ENCODE measurements at regions of chr2 and their contacts with region 1.

Region 1: DNA sequence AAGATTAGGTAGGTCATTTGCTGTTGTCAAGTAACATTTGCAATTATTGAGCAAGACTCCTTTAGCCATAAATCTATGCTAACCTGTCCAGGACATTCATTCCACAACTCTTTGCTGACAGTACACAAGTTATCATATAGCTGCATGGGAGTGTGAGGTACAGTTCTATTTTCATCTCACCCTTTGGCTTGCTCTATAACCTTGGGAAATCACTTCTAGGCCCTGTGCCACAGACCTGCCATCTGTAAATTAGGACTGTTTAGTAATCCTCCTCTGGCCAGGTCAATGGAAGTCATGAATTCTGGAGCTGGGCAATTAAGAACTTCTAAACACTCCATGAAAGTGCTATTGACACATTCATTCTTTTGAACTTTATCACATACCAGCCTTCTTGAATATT is 34.6 kb upstream of the PAIP2B start:
- DNase-seq: peak; percentile 8
- H3K4me3 Mint-ChIP-seq: no peak overlapping the region
- H3K27ac Mint-ChIP-seq: no peak overlapping the region
- H3K4me1 Mint-ChIP-seq: no peaks in the 10 kb centered on the region
- H3K27me3 Mint-ChIP-seq: peaks cover 52% of the 10 kb centered on the region
- CTCF ChIP-seq: no peak

Region 2: DNA sequence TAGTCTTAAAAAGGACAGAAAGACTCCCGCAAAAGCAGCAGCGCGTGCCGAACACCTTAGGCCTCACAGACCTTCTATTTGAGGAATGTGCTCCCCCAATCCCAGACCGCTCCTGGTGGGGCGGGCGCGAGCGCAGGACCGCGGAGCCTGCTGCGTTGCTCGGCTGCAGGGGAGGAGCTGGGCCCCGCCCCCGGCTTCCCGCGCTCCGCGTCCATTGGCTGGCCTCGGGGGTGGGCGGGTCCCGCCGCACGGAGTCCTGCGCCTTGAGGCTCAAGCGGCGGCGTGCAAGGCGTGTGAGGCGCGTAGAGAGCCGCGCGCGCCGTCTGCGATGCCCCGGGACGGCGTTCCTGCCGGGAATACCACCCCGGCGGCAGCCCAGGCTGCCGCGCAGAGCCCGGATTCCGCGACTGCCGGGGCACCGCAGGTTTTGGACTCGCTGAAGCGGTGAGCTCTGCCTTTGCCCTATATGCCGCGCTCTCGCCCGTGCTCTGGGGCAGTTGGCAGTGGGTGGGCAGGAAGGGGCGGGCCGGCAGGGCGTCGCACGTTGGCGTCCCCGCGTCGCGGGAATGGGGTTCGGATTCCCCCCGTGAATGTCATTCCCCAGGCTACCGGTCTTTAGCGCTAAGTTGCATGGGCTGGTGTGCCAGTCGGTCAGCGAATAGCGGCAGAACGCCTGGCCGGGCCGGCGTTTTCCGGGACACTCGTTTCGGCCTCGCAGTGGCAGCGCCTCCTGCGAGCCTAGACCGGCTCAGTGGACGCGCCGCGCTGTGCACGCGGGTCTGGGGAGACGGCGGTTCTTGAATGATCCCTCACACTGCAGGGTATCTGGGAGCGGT is 15.0 kb after region 1 on chr2:
- CTCF ChIA-PET with region 1: interaction called, 5 read pairs
- POLR2A ChIA-PET with region 1: interaction called, 30 read pairs
- intact Hi-C with region 1: no loop called
- DNase-seq: peak; percentile 91
- H3K4me3 Mint-ChIP-seq: peak overlapping the region; percentile 84
- H3K27ac Mint-ChIP-seq: no peak overlapping the region
- H3K4me1 Mint-ChIP-seq: peaks cover 16% of the 10 kb centered on the region
- H3K27me3 Mint-ChIP-seq: peaks cover 29% of the 10 kb centered on the region
- CTCF ChIP-seq: no peak

Region 3: GRCh38 chr2:71716781-71717624 is 455.5 kb after region 1 on chr2:
- CTCF ChIA-PET with region 1: no interaction called
- POLR2A ChIA-PET with region 1: no interaction called
- intact Hi-C with region 1: no loop called
- DNase-seq: peak; percentile 63
- H3K4me3 Mint-ChIP-seq: no peak overlapping the region
- H3K27ac Mint-ChIP-seq: no peak overlapping the region
- H3K4me1 Mint-ChIP-seq: peaks cover 7% of the 10 kb centered on the region
- H3K27me3 Mint-ChIP-seq: peaks cover 5% of the 10 kb centered on the region
- CTCF ChIP-seq: no peak